ENCODE measurements at regions of chr6 and their contacts with region 1.

Region 1: DNA sequence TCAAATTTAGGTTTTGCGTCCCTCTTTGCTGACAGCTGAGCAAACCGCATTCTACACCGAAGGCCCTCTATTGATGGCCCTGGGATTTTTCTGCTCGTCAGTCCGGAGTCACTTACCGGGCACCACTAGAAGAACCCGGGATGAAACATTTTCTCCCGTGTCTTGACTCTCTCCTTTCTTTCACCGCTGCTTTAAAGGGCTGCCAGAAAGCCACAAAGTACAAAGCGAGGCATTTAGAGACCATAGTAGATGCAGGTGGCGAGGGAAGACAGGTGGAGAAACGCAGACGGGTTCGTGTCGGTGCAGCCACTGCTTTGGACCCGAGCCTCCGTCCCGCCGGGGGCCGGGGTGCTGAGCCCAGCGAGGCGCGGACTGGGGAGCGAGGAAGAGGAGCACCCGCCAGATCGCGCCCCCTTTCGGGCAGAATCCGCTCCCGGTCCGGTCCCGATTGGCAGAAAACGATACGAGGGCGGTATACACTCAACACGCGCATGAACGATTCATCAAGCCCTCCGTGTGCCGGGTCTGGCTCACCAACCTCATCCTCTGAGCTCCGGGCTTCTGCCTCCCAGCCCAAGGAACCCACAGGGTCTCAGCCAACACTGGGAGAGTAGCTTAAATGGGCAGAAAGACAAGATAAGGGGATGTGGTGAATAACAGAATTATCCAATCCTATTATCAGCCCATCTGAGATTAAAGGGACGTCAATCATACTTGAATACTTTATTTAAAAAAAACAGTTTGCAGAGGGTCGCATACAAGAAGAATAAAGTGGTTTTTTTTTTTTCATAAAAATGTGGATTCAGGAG is 84.9 kb downstream of the TRIM27 start:
- DNase-seq: peak; percentile 93
- ATAC-seq: peak; percentile 86
- H3K4me3 Mint-ChIP-seq: peak overlapping the region; percentile 94
- H3K27ac Mint-ChIP-seq: peak overlapping the region; percentile 84
- H3K4me1 Mint-ChIP-seq: peaks cover 13% of the 10 kb centered on the region
- H3K27me3 Mint-ChIP-seq: peaks cover 27% of the 10 kb centered on the region
- CTCF ChIP-seq: peak; percentile 65

Region 2: DNA sequence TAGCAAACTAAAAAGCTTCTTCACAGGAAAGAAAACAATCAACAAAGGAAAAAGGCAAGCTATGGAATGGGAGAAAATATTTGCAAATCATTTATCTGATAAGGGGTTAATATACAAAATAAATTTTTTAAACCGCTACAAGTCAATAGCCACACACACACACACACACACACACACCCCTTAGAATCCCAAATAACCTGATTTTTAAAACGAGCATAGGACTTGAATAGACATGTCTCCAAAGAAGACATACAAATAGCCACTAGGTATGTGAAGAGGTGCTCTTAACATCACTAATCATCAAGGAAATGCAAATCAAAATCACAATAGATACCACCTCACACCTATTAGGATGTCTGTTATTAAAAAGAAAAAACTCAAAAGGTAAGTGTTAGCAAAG is 102.7 kb before region 1 on chr6:
- CTCF ChIA-PET with region 1: no interaction called
- POLR2A ChIA-PET with region 1: no interaction called
- intact Hi-C with region 1: no loop called
- DNase-seq: no peak
- ATAC-seq: no peak
- H3K4me3 Mint-ChIP-seq: no peak overlapping the region
- H3K27ac Mint-ChIP-seq: no peak overlapping the region
- H3K4me1 Mint-ChIP-seq: peaks cover 5% of the 10 kb centered on the region
- H3K27me3 Mint-ChIP-seq: peaks cover 74% of the 10 kb centered on the region
- CTCF ChIP-seq: no peak

Region 3: DNA sequence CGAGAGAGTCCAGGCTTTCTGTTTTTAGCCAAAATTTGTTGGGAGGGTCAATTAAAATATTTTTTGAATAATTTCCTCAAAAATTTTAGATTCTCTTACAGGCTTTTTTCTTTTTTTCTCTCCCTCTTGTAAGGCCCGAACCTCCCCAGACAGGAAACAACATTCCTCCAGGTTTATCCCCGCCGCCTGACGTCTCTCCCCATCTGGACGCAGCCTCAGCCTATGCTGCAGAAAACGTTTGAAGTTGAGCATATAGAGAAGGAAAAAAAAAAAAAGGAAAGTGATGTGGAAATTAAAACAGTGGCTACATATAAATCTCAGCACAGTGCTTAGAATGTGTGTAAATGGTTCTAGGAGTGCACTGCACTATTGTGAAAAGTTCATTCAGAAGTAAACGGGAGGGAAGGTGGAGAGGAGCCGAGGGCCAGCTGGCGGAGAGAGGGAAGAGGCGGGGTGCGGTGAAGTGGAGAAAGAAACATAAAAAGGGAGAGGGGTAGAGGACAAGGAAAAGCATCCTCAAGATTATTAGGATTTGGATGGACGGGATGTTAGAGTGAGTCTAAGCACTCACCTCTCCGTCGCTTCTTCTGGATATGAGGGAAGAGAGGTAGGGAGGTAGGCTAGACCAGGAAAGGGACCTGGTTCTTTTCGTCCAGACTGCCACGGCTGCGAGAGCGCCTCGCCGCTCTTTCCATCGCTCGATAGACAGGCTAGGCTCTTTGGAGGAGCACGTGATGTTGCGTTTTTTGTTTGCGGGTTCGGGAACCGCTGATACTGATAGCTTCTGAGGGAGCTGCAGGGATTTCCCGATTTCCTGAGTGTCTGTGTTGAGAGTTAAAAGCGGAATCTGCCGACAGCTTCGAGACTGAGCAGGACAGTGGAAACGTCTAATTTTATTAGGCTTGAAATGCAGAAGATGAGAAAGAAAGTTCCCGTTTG is 13.8 kb before region 1 on chr6:
- CTCF ChIA-PET with region 1: interaction called, 14 read pairs
- POLR2A ChIA-PET with region 1: no interaction called
- intact Hi-C with region 1: no loop called
- DNase-seq: no peak
- ATAC-seq: no peak
- H3K4me3 Mint-ChIP-seq: no peak overlapping the region
- H3K27ac Mint-ChIP-seq: no peak overlapping the region
- H3K4me1 Mint-ChIP-seq: peaks cover 10% of the 10 kb centered on the region
- H3K27me3 Mint-ChIP-seq: peaks cover 66% of the 10 kb centered on the region
- CTCF ChIP-seq: no peak

Region 4: GRCh38 chr6:28880894-28881780 is 42.3 kb after region 1 on chr6:
- CTCF ChIA-PET with region 1: interaction called, 11 read pairs
- POLR2A ChIA-PET with region 1: interaction called, 3 read pairs
- intact Hi-C with region 1: no loop called
- DNase-seq: peak; percentile 82
- ATAC-seq: no peak
- H3K4me3 Mint-ChIP-seq: peak overlapping the region; percentile 81
- H3K27ac Mint-ChIP-seq: peak overlapping the region; percentile 77
- H3K4me1 Mint-ChIP-seq: peaks cover 45% of the 10 kb centered on the region
- H3K27me3 Mint-ChIP-seq: peaks cover 1% of the 10 kb centered on the region
- CTCF ChIP-seq: no peak

Region 5: GRCh38 chr6:28923318-28924102 is 84.7 kb after region 1 on chr6 and contains the start of gene TRIM27:
- CTCF ChIA-PET with region 1: interaction called, 21 read pairs
- POLR2A ChIA-PET with region 1: interaction called, 14 read pairs
- intact Hi-C with region 1: no loop called
- DNase-seq: peak; percentile 84
- ATAC-seq: peak; percentile 89
- H3K4me3 Mint-ChIP-seq: peak within 1 kb of the TSS; percentile 94
- H3K27ac Mint-ChIP-seq: peak within 1 kb of the TSS; percentile 94
- H3K4me1 Mint-ChIP-seq: peaks cover 39% of the 10 kb centered on the region
- H3K27me3 Mint-ChIP-seq: no peaks in the 10 kb centered on the region
- CTCF ChIP-seq: no peak
- total RNA-seq, gene TRIM27: 45.6 to 46.4 TPM

Region 6: DNA sequence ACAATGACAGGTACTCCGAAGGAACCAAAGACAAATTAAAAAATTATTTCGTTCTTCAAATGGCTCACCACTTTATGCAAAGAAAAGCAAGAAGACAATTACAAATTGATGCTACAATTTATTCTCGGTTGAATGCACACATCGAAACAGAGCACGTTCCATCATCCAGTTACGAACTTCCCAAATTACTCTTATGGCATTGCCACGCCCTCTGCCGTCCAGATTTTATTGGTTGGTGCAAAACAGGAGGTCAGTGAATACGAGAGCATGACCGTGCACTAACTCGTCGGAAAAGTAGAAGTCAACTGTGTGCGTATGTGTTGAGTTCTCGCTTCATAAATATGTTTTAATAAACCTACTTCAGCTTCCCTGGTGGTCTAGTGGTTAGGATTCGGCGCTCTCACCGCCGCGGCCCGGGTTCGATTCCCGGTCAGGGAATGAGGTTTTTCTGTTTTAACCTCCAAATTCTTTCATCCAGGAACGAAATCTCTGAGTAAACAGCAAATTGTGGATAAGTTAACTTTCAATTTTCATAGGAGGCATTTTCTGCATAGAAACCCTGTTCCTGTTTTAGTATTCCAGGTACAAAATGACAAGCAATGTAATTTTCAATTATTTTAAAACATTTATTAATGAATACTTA is 143.1 kb after region 1 on chr6:
- CTCF ChIA-PET with region 1: interaction called, 30 read pairs
- POLR2A ChIA-PET with region 1: interaction called, 4 read pairs
- intact Hi-C with region 1: loop called (anchors 10 kb)
- DNase-seq: peak; percentile 77
- ATAC-seq: peak; percentile 48
- H3K4me3 Mint-ChIP-seq: peak overlapping the region; percentile 84
- H3K27ac Mint-ChIP-seq: peak overlapping the region; percentile 91
- H3K4me1 Mint-ChIP-seq: peaks cover 53% of the 10 kb centered on the region
- H3K27me3 Mint-ChIP-seq: peaks cover 38% of the 10 kb centered on the region
- CTCF ChIP-seq: no peak

Region 7: DNA sequence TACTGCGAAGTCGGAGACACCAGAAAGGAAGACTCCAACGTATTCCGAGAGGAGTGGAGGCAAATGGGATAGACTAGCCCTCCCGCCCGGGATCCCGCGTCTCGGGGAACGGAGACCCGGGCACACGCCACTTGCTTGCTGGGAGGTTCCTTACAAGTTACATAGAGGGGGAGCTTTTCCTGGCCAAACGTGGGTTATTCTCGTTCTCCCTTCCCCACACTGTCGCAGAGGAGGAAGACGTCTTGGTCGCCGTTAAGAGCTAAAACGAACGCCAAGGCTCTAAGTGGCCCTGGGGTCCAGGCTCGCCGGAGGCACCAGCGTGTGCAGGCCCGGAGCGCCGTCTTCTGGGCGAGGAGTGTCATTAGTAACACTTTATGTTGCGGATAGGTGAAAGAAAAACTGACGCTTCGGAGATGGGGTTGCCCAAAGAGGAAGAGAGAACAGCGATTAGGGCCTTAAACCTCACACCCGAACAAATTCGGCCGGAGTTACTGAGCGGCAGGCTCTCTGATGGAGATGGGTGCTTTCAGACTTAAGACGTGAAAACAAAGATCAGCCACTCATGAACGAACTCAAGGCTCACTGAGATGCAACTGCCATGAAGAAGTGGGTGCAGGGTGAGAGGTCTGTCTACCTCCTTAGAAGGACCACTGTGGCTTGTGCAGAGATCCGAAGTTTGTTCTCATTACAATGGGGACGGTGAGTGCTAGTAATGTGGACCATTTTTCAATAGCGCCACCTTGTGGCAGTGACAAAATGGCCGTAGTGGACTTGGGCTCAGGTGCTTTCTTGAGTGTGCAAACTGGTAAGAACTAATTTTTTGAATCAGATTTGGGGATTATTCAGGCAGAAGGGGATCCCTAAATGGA is 178.0 kb after region 1 on chr6:
- CTCF ChIA-PET with region 1: interaction called, 58 read pairs
- POLR2A ChIA-PET with region 1: interaction called, 8 read pairs
- intact Hi-C with region 1: loop called (anchors 2 kb)
- DNase-seq: peak; percentile 93
- ATAC-seq: peak; percentile 90
- H3K4me3 Mint-ChIP-seq: peak overlapping the region; percentile 81
- H3K27ac Mint-ChIP-seq: peak overlapping the region; percentile 78
- H3K4me1 Mint-ChIP-seq: peaks cover 17% of the 10 kb centered on the region
- H3K27me3 Mint-ChIP-seq: peaks cover 25% of the 10 kb centered on the region
- CTCF ChIP-seq: peak; percentile 81